ENCODE measurements at regions of chr2 and their contacts with region 1.

Region 1: GRCh38 chr2:24409700-24410556 is 49.6 kb upstream of the ITSN2 start:
- DNase-seq: no peak
- ATAC-seq: peak; percentile 84 to 95 (median 89)
- H3K4me3 ChIP-seq: peak overlapping the region; percentile 23
- H3K27ac ChIP-seq: no peak overlapping the region
- H3K4me1 ChIP-seq: peaks cover 14% of the 10 kb centered on the region
- H3K27me3 ChIP-seq: no peaks in the 10 kb centered on the region
- CTCF ChIP-seq: peak; percentile 87

Region 2: DNA sequence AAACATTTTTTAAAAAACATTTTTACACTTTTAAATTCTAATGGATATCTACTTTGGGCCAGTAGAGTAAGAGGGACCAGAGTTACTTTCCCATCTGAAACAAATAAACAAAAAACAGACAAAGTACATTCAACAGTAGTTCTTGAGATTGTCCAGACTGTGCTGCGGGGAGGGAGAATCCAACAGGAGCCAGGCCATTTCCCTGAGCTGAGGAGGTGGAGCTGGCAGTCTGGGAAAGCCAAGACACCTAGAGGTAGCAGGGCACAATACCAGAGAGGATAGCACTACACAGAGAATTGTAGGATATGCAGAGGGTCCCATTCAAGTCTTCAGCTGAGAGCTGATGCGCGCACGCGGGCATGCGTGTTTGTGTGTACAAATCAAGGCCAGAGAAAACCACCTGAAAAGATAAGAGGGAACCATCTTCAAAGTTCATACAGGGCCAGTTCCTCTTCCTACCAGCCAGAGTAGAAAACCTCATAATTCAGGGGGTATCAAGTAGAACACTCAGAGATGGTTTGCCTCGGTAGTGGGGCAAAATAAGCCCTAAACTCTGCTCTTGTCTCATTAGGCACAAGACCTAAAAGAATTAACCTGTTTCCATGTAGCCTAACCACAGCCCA is 339.3 kb after region 1 on chr2:
- intact Hi-C with region 1: loop called in 1 of 2 experiments (anchors 10 kb)
- DNase-seq: no peak
- ATAC-seq: no peak
- H3K4me3 ChIP-seq: no peak overlapping the region
- H3K27ac ChIP-seq: no peak overlapping the region
- H3K4me1 ChIP-seq: no peaks in the 10 kb centered on the region
- H3K27me3 ChIP-seq: no peaks in the 10 kb centered on the region
- CTCF ChIP-seq: no peak

Region 3: GRCh38 chr2:24827321-24828237 is 417.7 kb after region 1 on chr2:
- intact Hi-C with region 1: loop called (anchors 2 kb)
- DNase-seq: peak; percentile 74 to 81
- ATAC-seq: peak; percentile 87 to 94 (median 90)
- H3K4me3 ChIP-seq: peak overlapping the region; percentile 23
- H3K27ac ChIP-seq: no peak overlapping the region
- H3K4me1 ChIP-seq: peaks cover 5% of the 10 kb centered on the region
- H3K27me3 ChIP-seq: no peaks in the 10 kb centered on the region
- CTCF ChIP-seq: peak; percentile 89

Measured in psoas muscle (tissue), 8 donors.